Activated CD4-positive, alpha-beta memory T cell treated with anti-CD3 and anti-CD28 coated beads, Interleukin-2, amount 10 ng/mL, durations not matched to agents 7 days and 5 days (primary cell): ENCODE measurements at regions of chr12 and their contacts with region 1.

Region 1: DNA sequence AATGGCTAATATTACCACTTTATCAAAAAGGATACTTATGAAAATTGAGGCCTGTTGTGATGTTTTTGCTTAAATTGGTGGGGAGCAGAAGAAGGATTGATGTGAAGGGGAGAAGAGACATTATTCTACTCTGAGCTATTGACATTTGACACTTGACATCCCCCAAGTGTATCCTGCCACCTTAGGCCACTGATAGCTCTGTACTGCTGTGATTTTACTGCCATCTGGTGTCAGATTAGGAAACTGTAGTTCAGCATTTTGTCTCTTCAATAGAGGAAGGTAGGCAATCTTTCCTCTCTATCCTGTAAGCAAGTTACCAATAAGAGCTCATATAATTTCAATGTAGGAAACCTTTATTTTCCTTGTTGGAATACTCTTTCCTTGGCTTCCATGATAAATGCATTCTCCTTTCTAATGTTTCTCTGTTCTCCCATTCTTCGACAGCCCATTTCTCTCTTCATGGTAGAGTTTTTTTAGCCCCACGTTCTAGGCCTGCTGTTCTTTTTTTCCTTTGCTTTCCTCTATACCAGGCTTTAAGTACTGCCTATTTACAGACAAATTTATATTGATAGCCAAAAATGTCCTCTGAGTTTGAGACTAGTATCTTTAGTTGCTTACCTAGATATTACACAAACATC is 46.3 kb downstream of the PPHLN1 start:
- DNase-seq: no peak
- H3K4me3 Mint-ChIP-seq: no peak overlapping the region
- H3K27ac Mint-ChIP-seq: no peak overlapping the region
- H3K4me1 Mint-ChIP-seq: no peaks in the 10 kb centered on the region
- H3K27me3 Mint-ChIP-seq: no peaks in the 10 kb centered on the region

Region 2: GRCh38 chr12:42360747-42361403 is 11.4 kb before region 1 on chr12:
- CTCF ChIA-PET with region 1: interaction called, 19 read pairs
- POLR2A ChIA-PET with region 1: no interaction called
- DNase-seq: no peak
- H3K4me3 Mint-ChIP-seq: no peak overlapping the region
- H3K27ac Mint-ChIP-seq: peak overlapping the region; percentile 47
- H3K4me1 Mint-ChIP-seq: peaks cover 26% of the 10 kb centered on the region
- H3K27me3 Mint-ChIP-seq: no peaks in the 10 kb centered on the region

Region 3: GRCh38 chr12:42574851-42575266 is 202.6 kb after region 1 on chr12:
- CTCF ChIA-PET with region 1: no interaction called
- POLR2A ChIA-PET with region 1: no interaction called
- DNase-seq: no peak
- H3K4me3 Mint-ChIP-seq: no peak overlapping the region
- H3K27ac Mint-ChIP-seq: no peak overlapping the region
- H3K4me1 Mint-ChIP-seq: no peaks in the 10 kb centered on the region
- H3K27me3 Mint-ChIP-seq: peaks cover 12% of the 10 kb centered on the region